Calu3 (cell line): ENCODE measurements at regions of chr1 and their contacts with region 1.

Region 1: DNA sequence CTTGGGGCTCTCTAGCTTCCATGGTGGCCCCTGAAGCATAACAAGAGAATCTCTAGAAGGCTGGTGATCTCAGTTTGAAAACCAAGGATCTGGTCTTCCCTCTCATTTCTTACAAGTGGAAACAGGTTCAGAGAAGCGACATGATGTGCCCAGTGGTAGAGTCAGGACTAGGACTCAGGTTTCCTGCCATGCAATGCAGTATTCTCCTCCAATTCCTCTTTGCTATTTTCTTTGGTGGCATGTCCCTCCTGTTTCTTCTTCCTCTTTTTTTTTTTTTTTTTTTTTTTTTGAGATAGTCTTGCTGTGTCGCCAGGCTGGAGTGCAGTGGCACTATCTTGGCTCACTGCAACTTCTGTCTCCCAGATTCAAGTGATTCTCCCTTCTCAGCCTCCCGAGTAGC is 195.6 kb upstream of the C1orf105 start:
- DNase-seq: no peak
- H3K4me3 Mint-ChIP-seq: no peak overlapping the region
- H3K27ac Mint-ChIP-seq: no peak overlapping the region
- H3K4me1 Mint-ChIP-seq: no peaks in the 10 kb centered on the region
- H3K27me3 Mint-ChIP-seq: no peaks in the 10 kb centered on the region
- CTCF ChIP-seq: no peak

Region 2: DNA sequence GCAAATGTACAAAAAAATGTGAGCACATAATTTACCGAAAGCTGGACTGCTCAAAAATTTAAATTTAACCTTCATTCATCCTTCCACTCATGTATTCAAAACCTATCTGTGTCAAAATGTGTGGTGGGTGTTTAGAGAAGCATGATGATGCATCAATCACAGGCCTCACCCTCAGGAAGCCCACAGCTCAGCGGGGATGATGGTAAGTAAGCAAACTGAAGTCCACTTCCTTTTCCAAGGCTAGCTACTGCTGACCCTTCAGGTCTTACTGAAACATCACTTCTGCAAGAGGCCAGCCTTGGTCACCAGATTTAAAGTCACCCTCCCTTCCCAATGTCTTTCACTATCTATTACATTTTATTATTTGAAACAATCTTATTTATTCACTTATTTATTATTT is 129.0 kb before region 1 on chr1:
- CTCF ChIA-PET with region 1: no interaction called
- intact Hi-C with region 1: no loop called
- DNase-seq: no peak
- H3K4me3 Mint-ChIP-seq: no peak overlapping the region
- H3K27ac Mint-ChIP-seq: no peak overlapping the region
- H3K4me1 Mint-ChIP-seq: no peaks in the 10 kb centered on the region
- H3K27me3 Mint-ChIP-seq: no peaks in the 10 kb centered on the region
- CTCF ChIP-seq: no peak

Region 3: GRCh38 chr1:172203902-172204301 is 21.0 kb before region 1 on chr1:
- CTCF ChIA-PET with region 1: no interaction called
- intact Hi-C with region 1: loop called (anchors 2 kb)
- DNase-seq: no peak
- H3K4me3 Mint-ChIP-seq: no peak overlapping the region
- H3K27ac Mint-ChIP-seq: no peak overlapping the region
- H3K4me1 Mint-ChIP-seq: no peaks in the 10 kb centered on the region
- H3K27me3 Mint-ChIP-seq: no peaks in the 10 kb centered on the region
- CTCF ChIP-seq: no peak